Activated naive CD4-positive, alpha-beta T cell treated with anti-CD3 and anti-CD28 coated beads for 36 hours (primary cell): ENCODE measurements at regions of chr9 and their contacts with region 1.

Region 1: DNA sequence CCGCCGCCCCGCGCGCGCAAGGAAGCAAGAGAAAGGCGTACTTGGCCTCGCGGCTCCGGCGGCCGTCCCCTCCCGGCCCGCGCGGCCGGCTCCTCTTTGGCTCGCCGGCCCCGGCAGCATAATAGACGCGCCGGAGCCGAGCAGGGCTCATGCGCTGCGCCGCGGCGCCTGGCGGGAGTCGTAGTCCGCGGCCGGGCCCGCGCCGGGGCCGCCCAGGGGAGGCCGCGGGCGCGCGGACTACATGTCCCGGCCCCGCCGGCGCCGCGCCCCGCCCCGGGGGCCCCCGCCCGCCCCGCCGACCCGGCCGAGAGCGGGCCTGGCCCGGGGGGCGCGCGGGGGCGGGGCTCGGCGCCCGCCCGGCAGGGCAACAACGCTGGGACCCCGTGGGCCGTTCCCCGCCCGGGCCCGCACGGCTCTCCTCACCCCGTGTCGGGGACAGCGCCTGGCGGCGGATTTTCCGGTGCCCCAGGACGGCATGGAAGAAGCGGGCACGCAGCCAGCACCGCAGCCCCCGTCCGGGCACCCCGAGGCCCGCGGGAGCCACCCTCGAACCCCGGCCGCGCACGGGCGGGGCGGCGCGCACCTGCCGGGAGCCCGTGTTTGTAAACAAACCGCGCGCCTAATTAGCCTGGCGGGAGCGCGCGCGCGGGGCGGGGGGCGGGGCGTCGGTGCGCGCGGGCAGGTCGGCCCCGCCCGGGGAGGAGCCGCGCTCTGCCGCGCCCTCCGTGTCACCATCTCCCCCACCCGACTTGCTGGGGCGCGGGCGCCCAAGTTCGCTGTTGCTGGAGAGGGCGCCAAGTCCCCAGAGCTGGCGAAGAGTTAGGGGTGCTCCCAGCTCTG is at the start of gene BRD3:
- DNase-seq: peak; percentile 80
- H3K4me3 Mint-ChIP-seq: peak within 1 kb of the TSS; percentile 87
- H3K27ac Mint-ChIP-seq: peak within 1 kb of the TSS; percentile 80
- H3K4me1 Mint-ChIP-seq: peaks cover 29% of the 10 kb centered on the region
- H3K27me3 Mint-ChIP-seq: peaks cover 13% of the 10 kb centered on the region
- total RNA-seq, gene BRD3: 34.2 to 36.6 TPM

Region 2: GRCh38 chr9:134024828-134025605 is 43.1 kb before region 1 on chr9 and contains the start of gene BRD3OS:
- CTCF ChIA-PET with region 1: no interaction called
- intact Hi-C with region 1: loop called (anchors 1 kb)
- DNase-seq: peak; percentile 93
- H3K4me3 Mint-ChIP-seq: peak within 1 kb of the TSS; percentile 77
- H3K27ac Mint-ChIP-seq: no peak within 1 kb of the TSS
- H3K4me1 Mint-ChIP-seq: peaks cover 11% of the 10 kb centered on the region
- H3K27me3 Mint-ChIP-seq: no peaks in the 10 kb centered on the region
- total RNA-seq, gene BRD3OS: 6.3 to 6.7 TPM

Region 3: GRCh38 chr9:134099123-134099787 is 31.1 kb after region 1 on chr9:
- CTCF ChIA-PET with region 1: interaction called, 6 read pairs
- intact Hi-C with region 1: loop called (anchors 2 kb)
- DNase-seq: peak; percentile 70
- H3K4me3 Mint-ChIP-seq: no peak overlapping the region
- H3K27ac Mint-ChIP-seq: no peak overlapping the region
- H3K4me1 Mint-ChIP-seq: no peaks in the 10 kb centered on the region
- H3K27me3 Mint-ChIP-seq: peaks cover 8% of the 10 kb centered on the region

Region 4: GRCh38 chr9:134135343-134136118 is 67.4 kb after region 1 on chr9 and contains the start of gene WDR5:
- CTCF ChIA-PET with region 1: interaction called, 3 read pairs
- intact Hi-C with region 1: loop called (anchors 1 kb)
- DNase-seq: peak; percentile 92
- H3K4me3 Mint-ChIP-seq: peak within 1 kb of the TSS; percentile 86
- H3K27ac Mint-ChIP-seq: peak within 1 kb of the TSS; percentile 92
- H3K4me1 Mint-ChIP-seq: peaks cover 37% of the 10 kb centered on the region
- H3K27me3 Mint-ChIP-seq: no peaks in the 10 kb centered on the region
- total RNA-seq, gene WDR5: 39.4 to 40.4 TPM

Region 5: DNA sequence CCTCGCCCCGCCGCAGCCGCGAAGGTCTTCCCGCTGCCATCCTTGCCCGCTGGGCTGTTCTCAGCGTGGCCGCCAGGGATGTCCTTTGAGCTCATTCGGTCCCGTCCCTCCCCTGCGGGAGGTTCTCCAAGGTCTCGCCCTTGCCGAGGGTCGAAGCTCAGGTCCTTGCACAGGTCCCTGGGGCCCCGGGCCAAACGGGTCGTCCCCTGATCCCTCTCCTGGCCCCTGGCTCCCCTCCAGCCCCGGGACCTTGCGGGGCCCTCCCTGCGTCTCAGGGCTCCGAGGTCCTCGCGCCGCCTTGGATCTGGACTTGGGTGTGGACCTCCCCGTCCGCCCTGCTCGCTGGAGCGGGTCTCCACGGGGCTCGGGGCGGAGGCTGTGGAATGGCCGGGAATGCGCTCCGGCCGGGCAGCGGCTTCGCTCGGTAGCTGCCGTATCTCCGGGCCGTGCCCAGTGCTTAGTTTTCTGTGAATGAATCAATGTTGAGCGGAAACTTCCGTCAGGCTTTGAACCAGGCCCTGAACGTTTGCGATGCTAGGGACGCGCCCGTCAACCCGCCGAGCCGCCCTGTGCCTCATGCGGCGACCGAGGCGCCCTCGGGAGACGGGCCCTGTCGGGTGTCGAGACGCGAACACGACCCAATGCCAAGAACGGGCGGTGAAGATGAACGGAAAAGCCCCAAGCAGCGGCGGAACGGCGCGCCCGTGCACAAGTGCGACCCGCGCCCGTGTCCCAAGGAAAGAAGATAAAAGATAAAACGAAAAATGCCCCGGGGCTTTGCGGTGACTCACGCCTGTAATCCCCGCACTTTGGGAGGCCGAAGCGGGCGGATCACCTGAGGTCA is 95.5 kb after region 1 on chr9:
- CTCF ChIA-PET with region 1: interaction called, 6 read pairs
- intact Hi-C with region 1: loop called (anchors 1 kb)
- DNase-seq: peak; percentile 78
- H3K4me3 Mint-ChIP-seq: peak overlapping the region; percentile 27
- H3K27ac Mint-ChIP-seq: no peak overlapping the region
- H3K4me1 Mint-ChIP-seq: peaks cover 14% of the 10 kb centered on the region
- H3K27me3 Mint-ChIP-seq: no peaks in the 10 kb centered on the region

Region 6: GRCh38 chr9:134399435-134400056 is 331.4 kb after region 1 on chr9:
- CTCF ChIA-PET with region 1: no interaction called
- intact Hi-C with region 1: loop called (anchors 2 kb)
- DNase-seq: peak; percentile 34
- H3K4me3 Mint-ChIP-seq: no peak overlapping the region
- H3K27ac Mint-ChIP-seq: no peak overlapping the region
- H3K4me1 Mint-ChIP-seq: peaks cover 34% of the 10 kb centered on the region
- H3K27me3 Mint-ChIP-seq: no peaks in the 10 kb centered on the region